ENCODE measurements at regions of chr1 and their contacts with region 1.

Region 1: DNA sequence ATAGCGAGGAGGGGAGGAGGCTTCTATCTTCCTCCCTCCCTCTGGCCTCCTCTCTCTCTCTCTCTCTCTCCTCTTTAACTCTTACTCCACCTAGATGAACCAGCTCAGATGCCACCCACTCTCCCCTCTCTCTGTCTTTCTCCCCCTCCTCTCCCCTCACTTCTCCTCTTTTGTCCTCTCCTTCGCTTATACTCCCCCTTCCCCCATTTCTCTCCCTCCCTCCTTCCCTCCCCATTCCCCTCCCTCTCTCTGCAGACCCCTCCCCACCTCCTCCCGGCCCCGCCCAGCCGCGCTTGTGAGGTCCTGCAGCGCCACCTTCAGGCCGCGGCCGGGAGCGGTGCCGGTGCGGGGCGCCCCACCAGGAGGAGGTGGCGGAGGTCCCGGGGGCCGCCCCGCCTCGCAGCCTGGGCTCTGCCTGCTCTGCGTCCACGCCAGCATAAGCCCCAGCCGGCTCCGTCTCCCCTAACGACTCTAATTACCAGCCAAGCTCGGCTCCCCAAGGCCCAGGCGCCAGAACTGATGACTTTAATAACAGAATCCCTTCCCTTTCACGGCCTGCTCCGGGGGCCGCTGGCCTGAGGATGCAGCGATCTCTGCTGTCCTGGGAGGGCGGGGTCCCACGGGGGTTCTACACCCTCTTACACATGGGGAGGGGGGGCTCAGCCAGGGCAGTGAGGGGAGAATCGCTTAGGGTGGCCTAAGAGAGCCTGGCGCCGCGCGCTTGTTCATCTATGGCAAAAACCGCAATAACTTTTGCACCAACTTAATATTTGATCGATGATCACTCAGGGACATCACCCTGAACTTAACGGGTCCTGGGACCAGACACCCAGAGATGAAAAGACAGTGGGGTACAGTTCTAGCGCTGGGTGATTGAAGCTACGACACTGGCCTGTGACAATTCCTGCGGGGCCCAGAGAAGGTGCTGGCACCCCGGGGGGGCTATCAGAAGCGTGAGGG is 637.3 kb downstream of the MATN1 start:
- DNase-seq: no peak
- H3K4me3 ChIP-seq: no peak overlapping the region
- H3K27ac ChIP-seq: no peak overlapping the region
- H3K4me1 ChIP-seq: peaks cover 14% of the 10 kb centered on the region
- H3K27me3 ChIP-seq: no peaks in the 10 kb centered on the region
- CTCF ChIP-seq: peak; percentile 38 to 73

Region 2: GRCh38 chr1:29230553-29231378 is 855.3 kb before region 1 on chr1 and contains the start of gene MECR:
- CTCF ChIA-PET with region 1: no interaction called
- dilution Hi-C with region 1: no loop called
- in situ Hi-C with region 1: loop called in 1 of 2 experiments (anchors 25 kb)
- intact Hi-C with region 1: no loop called
- DNase-seq: peak; percentile 85
- H3K4me3 ChIP-seq: peak within 1 kb of the TSS; percentile 75 to 96 (median 92)
- H3K27ac ChIP-seq: peak within 1 kb of the TSS; percentile 85
- H3K4me1 ChIP-seq: peaks cover 13% of the 10 kb centered on the region
- H3K27me3 ChIP-seq: no peaks in the 10 kb centered on the region
- CTCF ChIP-seq: peak in 1 of 2 donors; percentile 33
- total RNA-seq, gene MECR: 28.7 to 35.4 TPM

Region 3: DNA sequence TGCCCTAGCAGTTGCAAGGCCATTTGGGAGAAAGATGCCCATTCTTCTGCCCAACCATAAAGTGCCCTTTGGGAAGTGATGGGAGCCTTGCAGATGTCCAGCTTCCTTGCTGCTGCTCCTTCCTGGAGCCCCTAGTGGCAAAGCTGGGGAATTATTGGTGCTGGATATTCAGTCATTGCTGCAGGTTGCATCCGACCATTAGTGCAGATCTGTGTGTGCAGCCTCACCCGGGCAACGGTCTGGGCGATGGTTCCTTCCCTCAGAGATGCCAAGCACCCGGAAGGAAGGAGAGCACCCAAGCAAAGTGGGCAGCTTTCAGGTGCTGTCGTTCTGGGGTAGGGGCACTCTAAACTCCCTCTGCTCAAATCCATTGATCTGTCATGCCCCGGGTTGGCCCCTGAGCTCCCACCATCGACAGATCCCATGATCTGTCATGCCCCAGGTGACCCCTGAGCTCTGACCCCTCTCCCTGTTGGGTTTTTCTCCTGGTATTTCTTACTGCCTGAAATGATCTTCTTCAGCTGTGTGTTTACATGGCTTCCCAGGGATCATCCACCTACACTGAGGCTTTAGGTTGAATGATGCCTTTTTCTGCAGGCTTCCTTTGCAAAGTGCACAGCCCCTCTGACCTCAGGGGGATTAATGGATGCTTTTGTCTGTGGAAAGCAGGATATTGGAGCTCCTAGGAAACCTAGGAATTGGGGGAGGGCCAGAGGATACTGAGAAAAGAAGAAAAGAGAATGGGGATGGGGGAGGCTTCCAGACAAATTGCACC is 382.3 kb before region 1 on chr1:
- CTCF ChIA-PET with region 1: no interaction called
- dilution Hi-C with region 1: no loop called
- in situ Hi-C with region 1: loop called in 1 of 2 experiments (anchors 10 kb)
- intact Hi-C with region 1: loop called (anchors 5 kb)
- DNase-seq: peak; percentile 45
- H3K4me3 ChIP-seq: no peak overlapping the region
- H3K27ac ChIP-seq: no peak overlapping the region
- H3K4me1 ChIP-seq: peaks cover 16% of the 10 kb centered on the region
- H3K27me3 ChIP-seq: no peaks in the 10 kb centered on the region
- CTCF ChIP-seq: peak; percentile 91 to 95

Region 4: GRCh38 chr1:29784276-29785136 is 301.6 kb before region 1 on chr1:
- CTCF ChIA-PET with region 1: no interaction called
- dilution Hi-C with region 1: no loop called
- in situ Hi-C with region 1: no loop called
- intact Hi-C with region 1: no loop called
- DNase-seq: no peak
- H3K4me3 ChIP-seq: no peak overlapping the region
- H3K27ac ChIP-seq: no peak overlapping the region
- H3K4me1 ChIP-seq: peaks cover 8% of the 10 kb centered on the region
- H3K27me3 ChIP-seq: peaks cover 3% of the 10 kb centered on the region
- CTCF ChIP-seq: no peak

Region 5: GRCh38 chr1:29912425-29912824 is 173.7 kb before region 1 on chr1:
- CTCF ChIA-PET with region 1: no interaction called
- dilution Hi-C with region 1: no loop called
- in situ Hi-C with region 1: loop called in 1 of 2 experiments (anchors 10 kb)
- intact Hi-C with region 1: loop called (anchors 1 kb)
- DNase-seq: peak; percentile 30
- H3K4me3 ChIP-seq: no peak overlapping the region
- H3K27ac ChIP-seq: no peak overlapping the region
- H3K4me1 ChIP-seq: no peaks in the 10 kb centered on the region
- H3K27me3 ChIP-seq: no peaks in the 10 kb centered on the region
- CTCF ChIP-seq: peak; percentile 41 to 67

Region 6: DNA sequence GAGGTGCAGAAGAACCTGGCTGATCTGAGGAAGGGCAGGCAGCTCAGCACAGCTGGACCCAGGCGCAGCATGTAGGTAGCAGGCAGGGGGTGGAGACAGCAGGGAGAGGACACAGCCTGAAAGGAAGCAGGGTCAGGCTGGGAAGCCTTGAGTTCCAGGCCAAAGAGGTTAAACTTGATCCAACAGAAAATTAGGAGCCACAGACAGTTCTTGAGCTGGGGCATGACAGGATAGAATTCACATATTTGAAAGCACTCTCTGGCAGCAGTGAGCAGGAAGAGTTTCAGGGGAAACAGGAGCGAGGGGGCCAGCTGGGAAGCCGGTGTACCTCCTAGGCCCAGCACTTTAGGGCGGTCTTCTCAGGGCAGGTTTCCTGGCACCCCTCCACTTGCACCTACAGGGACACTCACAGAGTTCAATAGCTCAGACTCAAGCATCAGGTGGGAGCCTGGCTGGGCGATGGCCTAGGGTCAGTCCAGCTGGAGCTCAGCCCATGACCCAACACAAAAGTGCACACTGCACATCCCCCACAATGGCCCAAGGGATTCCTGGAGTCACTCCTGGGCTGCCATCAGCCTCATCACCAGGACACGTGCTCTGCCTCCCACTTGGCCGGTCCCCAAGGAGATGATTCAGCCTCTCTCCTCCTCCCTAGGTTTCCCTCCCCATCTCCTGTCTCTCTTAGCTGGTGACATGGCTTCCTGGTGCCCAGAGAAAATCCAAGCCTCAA is 614.6 kb after region 1 on chr1:
- CTCF ChIA-PET with region 1: no interaction called
- dilution Hi-C with region 1: no loop called
- in situ Hi-C with region 1: loop called in 1 of 2 experiments (anchors 25 kb)
- intact Hi-C with region 1: loop called (anchors 2 kb)
- DNase-seq: peak; percentile 68
- H3K4me3 ChIP-seq: no peak overlapping the region
- H3K27ac ChIP-seq: no peak overlapping the region
- H3K4me1 ChIP-seq: peaks cover 24% of the 10 kb centered on the region
- H3K27me3 ChIP-seq: no peaks in the 10 kb centered on the region
- CTCF ChIP-seq: no peak